ENCODE measurements at regions of chr18 and their contacts with region 1.

Region 1: GRCh38 chr18:50055488-50055887 is 139.5 kb downstream of the MYO5B start:
- DNase-seq: no peak
- ATAC-seq: no peak
- H3K4me3 ChIP-seq: no peak overlapping the region
- H3K27ac ChIP-seq: no peak overlapping the region
- H3K4me1 ChIP-seq: no peaks in the 10 kb centered on the region
- H3K27me3 ChIP-seq: no peaks in the 10 kb centered on the region
- CTCF ChIP-seq: no peak

Region 2: GRCh38 chr18:50075772-50076171 is 20.3 kb after region 1 on chr18:
- intact Hi-C with region 1: loop called in 1 of 2 experiments (anchors 2 kb)
- DNase-seq: no peak
- ATAC-seq: no peak
- H3K4me3 ChIP-seq: no peak overlapping the region
- H3K27ac ChIP-seq: no peak overlapping the region
- H3K4me1 ChIP-seq: peaks cover 12% of the 10 kb centered on the region
- H3K27me3 ChIP-seq: peaks cover 0 to 5% (median 0%) of the 10 kb centered on the region in 3 donors
- CTCF ChIP-seq: no peak

Measured in psoas muscle (tissue), 8 donors.